ENCODE measurements at regions of chr17 and their contacts with region 1.

Region 1: GRCh38 chr17:63621766-63622519 is at the start of gene MAP3K3:
- DNase-seq: peak; percentile 100
- ATAC-seq: peak; percentile 89
- H3K4me3 ChIP-seq: peak within 1 kb of the TSS; percentile 80
- H3K27ac ChIP-seq: peak within 1 kb of the TSS; percentile 67
- H3K4me1 ChIP-seq: peaks cover 12 to 18% of the 10 kb centered on the region in 2 experiments; a peak in 3 of 4 replicates
- H3K27me3 ChIP-seq: no peaks in the 10 kb centered on the region
- CTCF ChIP-seq: 0 out of 6 replicates have a peak, but pooled peaks of 1 of the 3 experiments have one; percentile 10
- POLR2A ChIP-seq: peak; percentile 94
- RAD21 ChIP-seq: no peak
- total RNA-seq, gene MAP3K3: 18.5 TPM

Region 2: GRCh38 chr17:63445979-63446691 is 175.8 kb before region 1 on chr17 and contains the start of gene CYB561:
- CTCF ChIA-PET with region 1: no interaction called
- POLR2A ChIA-PET with region 1: interaction called, 3 read pairs
- RAD21 ChIA-PET with region 1: no interaction called
- intact Hi-C with region 1: loop called (anchors 2 kb)
- DNase-seq: peak; percentile 47
- ATAC-seq: peak; percentile 90
- H3K4me3 ChIP-seq: peak within 1 kb of the TSS; percentile 85 to 86
- H3K27ac ChIP-seq: peak within 1 kb of the TSS; percentile 92
- H3K4me1 ChIP-seq: peaks cover 15 to 35% of the 10 kb centered on the region in 2 experiments
- H3K27me3 ChIP-seq: no peaks in the 10 kb centered on the region
- CTCF ChIP-seq: peak in 2 of 3 experiments; percentile 54 to 74; a peak in 4 of 6 replicates
- POLR2A ChIP-seq: peak; percentile 71
- RAD21 ChIP-seq: no peak
- total RNA-seq, gene CYB561: 67.6 TPM

Region 3: GRCh38 chr17:63478791-63479494 is 143.0 kb before region 1 on chr17:
- CTCF ChIA-PET with region 1: no interaction called
- POLR2A ChIA-PET with region 1: no interaction called
- RAD21 ChIA-PET with region 1: no interaction called
- intact Hi-C with region 1: no loop called
- DNase-seq: peak; percentile 93
- ATAC-seq: peak; percentile 89
- H3K4me3 ChIP-seq: peak overlapping the region in 1 of 2 experiments; percentile 5; a peak in 2 of 4 replicates
- H3K27ac ChIP-seq: peak overlapping the region; percentile 5; the same call in 1 of the 2 replicates
- H3K4me1 ChIP-seq: peaks cover 13 to 41% of the 10 kb centered on the region in 2 experiments
- H3K27me3 ChIP-seq: no peaks in the 10 kb centered on the region
- CTCF ChIP-seq: peak; percentile 97 to 99 (median 99)
- POLR2A ChIP-seq: no peak
- RAD21 ChIP-seq: peak; percentile 97

Region 4: DNA sequence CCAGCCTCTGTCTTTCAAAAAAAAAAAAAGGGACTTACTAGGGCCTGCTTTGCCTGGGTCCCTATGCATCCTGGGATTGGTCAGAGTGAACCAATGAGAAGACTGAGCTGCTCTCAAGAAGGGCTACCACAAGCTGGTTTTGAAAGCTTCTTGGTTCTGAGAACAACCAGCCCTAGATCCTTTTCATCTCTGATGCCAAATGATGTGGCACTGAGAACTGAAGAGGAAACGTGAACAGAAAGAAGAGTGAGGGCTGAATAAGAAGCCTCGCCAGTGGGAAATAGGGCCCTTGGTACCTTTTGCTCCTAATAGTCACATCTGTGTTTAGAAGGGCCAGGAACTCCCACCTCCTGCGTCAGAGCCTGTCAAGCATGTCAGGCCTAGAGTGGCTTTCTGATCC is 10.6 kb before region 1 on chr17:
- CTCF ChIA-PET with region 1: interaction called, 71 read pairs
- POLR2A ChIA-PET with region 1: interaction called, 17 read pairs
- RAD21 ChIA-PET with region 1: interaction called in 1 of 2 experiments, 5 read pairs
- intact Hi-C with region 1: no loop called
- DNase-seq: no peak
- ATAC-seq: no peak
- H3K4me3 ChIP-seq: no peak overlapping the region
- H3K27ac ChIP-seq: no peak overlapping the region
- H3K4me1 ChIP-seq: no peaks in the 10 kb centered on the region
- H3K27me3 ChIP-seq: no peaks in the 10 kb centered on the region
- CTCF ChIP-seq: no peak
- POLR2A ChIP-seq: no peak
- RAD21 ChIP-seq: no peak

Region 5: DNA sequence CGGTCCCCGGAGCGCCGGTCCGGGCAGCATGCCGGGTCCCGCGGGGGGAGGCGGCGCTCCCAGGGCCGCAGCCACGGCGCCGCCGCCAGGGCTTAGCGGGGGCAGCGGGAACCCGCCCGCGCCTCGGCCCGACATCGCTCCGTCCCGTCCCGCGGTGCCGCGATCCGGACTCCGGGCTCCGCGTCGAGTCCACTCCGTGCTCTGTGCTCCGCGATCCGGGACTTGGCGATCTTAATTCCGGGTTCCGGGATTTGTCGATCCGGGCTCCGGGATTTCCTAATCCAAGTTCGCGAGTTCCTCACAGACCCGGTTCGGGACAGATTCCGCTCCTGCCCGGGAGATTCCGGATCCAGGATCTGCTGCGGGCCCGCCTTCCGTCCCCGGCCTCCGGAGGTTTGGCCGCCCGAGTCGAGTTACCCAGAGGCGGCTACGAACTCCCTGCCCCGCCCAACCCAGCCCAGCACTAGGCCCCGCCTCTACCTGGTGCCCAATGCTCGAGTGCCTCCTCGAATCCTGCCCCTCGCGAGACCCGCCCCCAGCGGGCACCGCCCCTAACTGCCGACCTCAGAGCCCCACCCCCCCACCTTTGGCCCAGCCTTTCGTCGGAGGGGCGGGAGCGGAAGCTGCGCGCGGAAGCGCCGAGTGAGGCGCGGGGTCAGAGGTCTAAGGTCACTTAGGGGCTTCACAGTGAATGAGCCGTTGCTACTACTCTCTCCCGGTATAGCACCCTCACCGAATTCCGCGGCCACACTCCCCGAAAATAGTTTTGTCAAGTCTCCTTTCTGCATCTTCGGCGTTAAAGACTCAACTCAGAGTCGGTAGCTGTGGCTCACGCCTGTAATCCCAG is 220.8 kb after region 1 on chr17 and contains the start of gene SMARCD2:
- CTCF ChIA-PET with region 1: no interaction called
- POLR2A ChIA-PET with region 1: no interaction called
- RAD21 ChIA-PET with region 1: no interaction called
- intact Hi-C with region 1: loop called (anchors 5 kb)
- DNase-seq: peak; percentile 100
- ATAC-seq: peak; percentile 87
- H3K4me3 ChIP-seq: peak within 1 kb of the TSS; percentile 92 to 95
- H3K27ac ChIP-seq: peak within 1 kb of the TSS; percentile 96
- H3K4me1 ChIP-seq: peaks cover 40 to 46% of the 10 kb centered on the region in 2 experiments
- H3K27me3 ChIP-seq: no peaks in the 10 kb centered on the region
- CTCF ChIP-seq: no peak
- POLR2A ChIP-seq: no peak
- RAD21 ChIP-seq: no peak
- total RNA-seq, gene SMARCD2: 168 TPM

Measured in HCT116 (cell line).